PC-9 (cell line): ENCODE measurements at regions of chr18 and their contacts with region 1.

Region 1: GRCh38 chr18:73715210-73715670 is 432.4 kb downstream of the FBXO15 start:
- DNase-seq: no peak
- H3K4me3 ChIP-seq: no peak overlapping the region
- H3K27ac ChIP-seq: no peak overlapping the region
- H3K4me1 ChIP-seq: peaks cover 11% of the 10 kb centered on the region
- H3K27me3 ChIP-seq: no peaks in the 10 kb centered on the region
- CTCF ChIP-seq: no peak

Region 2: GRCh38 chr18:73777356-73778345 is 62.4 kb after region 1 on chr18:
- CTCF ChIA-PET with region 1: no interaction called
- POLR2A ChIA-PET with region 1: interaction called, 10 read pairs
- intact Hi-C with region 1: no loop called
- DNase-seq: no peak
- H3K4me3 ChIP-seq: no peak overlapping the region
- H3K27ac ChIP-seq: no peak overlapping the region
- H3K4me1 ChIP-seq: no peaks in the 10 kb centered on the region
- H3K27me3 ChIP-seq: no peaks in the 10 kb centered on the region
- CTCF ChIP-seq: no peak

Region 3: GRCh38 chr18:74069178-74070055 is 354.2 kb after region 1 on chr18:
- CTCF ChIA-PET with region 1: no interaction called
- POLR2A ChIA-PET with region 1: no interaction called
- intact Hi-C with region 1: no loop called
- DNase-seq: no peak
- H3K4me3 ChIP-seq: no peak overlapping the region
- H3K27ac ChIP-seq: no peak overlapping the region
- H3K4me1 ChIP-seq: no peaks in the 10 kb centered on the region
- H3K27me3 ChIP-seq: peaks cover 40% of the 10 kb centered on the region; the same call in 1 of the 2 replicates
- CTCF ChIP-seq: no peak